Activated CD8-positive, alpha-beta T cell treated with anti-CD3 and anti-CD28 coated beads for 36 hours (primary cell): ENCODE measurements at regions of chr21 and their contacts with region 1.

Region 1: GRCh38 chr21:25385911-25386474 is 221.3 kb downstream of the MRPL39 start:
- DNase-seq: no peak
- ATAC-seq: peak; percentile 70
- H3K4me3 Mint-ChIP-seq: no peak overlapping the region
- H3K27ac Mint-ChIP-seq: no peak overlapping the region
- H3K4me1 Mint-ChIP-seq: peaks cover 14% of the 10 kb centered on the region
- H3K27me3 Mint-ChIP-seq: peaks cover 2% of the 10 kb centered on the region
- CTCF ChIP-seq: peak; percentile 90

Region 2: DNA sequence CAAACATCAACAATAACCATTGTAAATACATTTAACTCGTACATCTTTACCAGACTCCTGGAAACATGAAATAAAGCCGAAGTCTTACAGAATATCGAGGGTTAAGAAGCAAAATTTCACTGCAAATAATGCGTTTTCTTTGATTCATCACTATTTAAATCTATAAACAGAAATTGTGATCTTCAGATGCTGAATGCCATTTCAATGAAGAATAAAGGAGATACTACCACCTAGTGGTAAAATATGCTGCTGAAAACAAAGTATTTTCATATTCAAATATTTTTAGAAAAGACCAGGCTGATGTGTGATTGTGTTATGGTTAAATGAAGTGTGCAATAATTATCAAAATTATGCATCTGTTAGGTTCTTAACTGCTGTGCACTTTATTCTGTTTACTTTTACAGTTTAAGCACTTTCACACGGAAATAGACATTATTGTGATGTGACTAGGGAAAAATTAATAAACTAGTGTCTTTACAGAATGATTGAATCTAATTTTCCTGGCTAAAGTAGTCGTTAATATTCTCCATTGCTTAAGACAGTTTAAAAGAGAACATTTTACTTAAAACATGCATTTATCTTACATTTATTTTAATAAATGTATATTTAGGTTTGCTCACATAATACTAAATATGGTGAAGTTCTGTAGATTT is 871.8 kb before region 1 on chr21:
- CTCF ChIA-PET with region 1: no interaction called
- POLR2A ChIA-PET with region 1: no interaction called
- intact Hi-C with region 1: loop called (anchors 10 kb)
- DNase-seq: no peak
- ATAC-seq: no peak
- H3K4me3 Mint-ChIP-seq: no peak overlapping the region
- H3K27ac Mint-ChIP-seq: no peak overlapping the region
- H3K4me1 Mint-ChIP-seq: no peaks in the 10 kb centered on the region
- H3K27me3 Mint-ChIP-seq: no peaks in the 10 kb centered on the region
- CTCF ChIP-seq: peak; percentile 74

Region 3: DNA sequence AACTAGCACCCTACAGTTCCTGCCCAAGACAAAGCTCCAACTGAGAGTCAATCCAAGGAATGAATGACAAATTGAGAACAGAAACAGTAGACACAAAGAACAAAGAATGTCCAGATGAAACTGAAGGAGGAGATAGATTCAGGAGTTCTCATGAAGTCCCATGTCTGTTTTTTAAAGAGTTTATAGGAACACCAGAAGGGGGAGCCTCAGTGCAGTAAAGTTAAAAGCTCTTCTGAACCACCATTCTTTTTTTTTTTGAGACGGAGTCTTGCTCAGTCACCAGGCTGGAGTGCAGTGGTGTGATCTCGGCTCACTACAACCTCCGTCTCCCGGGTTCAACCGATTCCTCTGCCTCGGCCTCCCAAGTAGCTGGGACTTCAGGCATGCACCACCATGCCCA is 102.3 kb before region 1 on chr21:
- CTCF ChIA-PET with region 1: interaction called, 21 read pairs
- POLR2A ChIA-PET with region 1: no interaction called
- intact Hi-C with region 1: loop called (anchors 5 kb)
- DNase-seq: no peak
- ATAC-seq: peak; percentile 45
- H3K4me3 Mint-ChIP-seq: no peak overlapping the region
- H3K27ac Mint-ChIP-seq: no peak overlapping the region
- H3K4me1 Mint-ChIP-seq: no peaks in the 10 kb centered on the region
- H3K27me3 Mint-ChIP-seq: peaks cover 4% of the 10 kb centered on the region
- CTCF ChIP-seq: peak; percentile 44

Region 4: DNA sequence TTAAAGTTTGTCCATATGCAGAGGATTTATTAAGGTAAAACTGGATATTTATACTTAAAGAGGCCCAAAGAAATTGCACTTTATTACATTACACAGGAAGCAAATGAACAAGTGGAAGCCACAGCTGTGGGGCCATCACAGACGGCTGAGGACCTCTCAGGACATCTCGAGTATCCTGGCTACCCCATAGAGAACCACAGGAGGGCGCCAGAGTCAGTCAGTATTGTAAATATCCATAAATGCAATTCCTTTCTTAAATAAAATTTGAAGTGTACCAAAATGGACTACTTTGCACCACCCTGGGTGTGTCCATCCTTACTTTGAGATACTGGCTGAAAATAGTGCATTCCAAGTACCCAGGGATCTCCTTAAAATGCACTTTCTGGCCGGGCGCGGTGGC is 35.9 kb before region 1 on chr21:
- CTCF ChIA-PET with region 1: interaction called, 54 read pairs
- POLR2A ChIA-PET with region 1: no interaction called
- intact Hi-C with region 1: no loop called
- DNase-seq: peak; percentile 77
- ATAC-seq: peak; percentile 78
- H3K4me3 Mint-ChIP-seq: no peak overlapping the region
- H3K27ac Mint-ChIP-seq: no peak overlapping the region
- H3K4me1 Mint-ChIP-seq: peaks cover 5% of the 10 kb centered on the region
- H3K27me3 Mint-ChIP-seq: peaks cover 29% of the 10 kb centered on the region
- CTCF ChIP-seq: peak; percentile 75

Region 5: DNA sequence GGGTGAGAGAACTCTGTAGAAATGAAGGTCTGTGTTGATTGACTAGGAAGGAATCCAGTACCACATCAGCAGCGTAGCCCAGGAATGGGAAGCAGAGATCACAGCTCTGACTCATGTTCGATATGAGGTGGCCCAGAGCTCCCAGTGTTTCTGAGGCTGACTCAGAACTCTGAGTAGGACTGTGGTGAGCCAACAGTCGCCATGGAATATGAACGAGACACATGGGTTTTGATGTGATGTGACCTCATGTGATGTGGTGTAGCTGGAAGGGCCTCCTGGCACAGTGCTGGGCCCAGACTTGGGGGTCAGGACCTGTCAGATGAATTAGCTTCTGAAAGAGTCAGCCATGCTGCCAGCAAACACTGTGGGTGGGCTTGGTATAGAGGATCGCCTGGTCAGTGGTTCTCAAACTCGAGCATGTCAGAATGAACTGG is 15.7 kb before region 1 on chr21:
- CTCF ChIA-PET with region 1: interaction called, 14 read pairs
- POLR2A ChIA-PET with region 1: no interaction called
- intact Hi-C with region 1: loop called (anchors 1 kb)
- DNase-seq: peak; percentile 17
- ATAC-seq: peak; percentile 75
- H3K4me3 Mint-ChIP-seq: no peak overlapping the region
- H3K27ac Mint-ChIP-seq: no peak overlapping the region
- H3K4me1 Mint-ChIP-seq: peaks cover 3% of the 10 kb centered on the region
- H3K27me3 Mint-ChIP-seq: peaks cover 3% of the 10 kb centered on the region
- CTCF ChIP-seq: no peak

Region 6: DNA sequence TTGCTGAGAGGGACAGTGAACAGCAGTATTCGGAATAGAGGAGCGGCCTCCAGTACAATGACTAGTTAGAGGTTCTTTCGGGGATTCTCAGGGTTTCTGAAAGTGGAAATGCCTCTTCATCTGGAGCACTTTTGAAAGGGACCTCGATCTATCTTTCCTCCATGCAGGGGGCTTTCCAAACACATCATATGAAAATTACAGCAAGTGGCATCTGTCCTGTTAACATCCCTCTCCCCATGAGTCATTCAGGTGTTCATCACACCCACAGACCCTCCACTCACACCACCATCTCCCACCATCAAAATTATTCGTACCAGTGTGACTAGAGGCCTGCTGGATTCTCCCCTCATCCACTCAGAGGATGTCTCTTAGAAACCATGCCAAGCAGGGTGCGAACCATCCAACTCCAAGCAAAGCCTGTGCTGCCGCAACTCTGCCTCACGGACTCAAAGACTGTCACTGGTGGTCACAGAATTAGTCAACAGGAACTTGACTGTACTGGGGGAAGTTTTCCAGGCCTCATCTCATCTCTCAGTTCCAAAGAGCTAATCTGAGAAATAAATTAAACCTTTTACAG is 10.2 kb after region 1 on chr21:
- CTCF ChIA-PET with region 1: interaction called, 14 read pairs
- POLR2A ChIA-PET with region 1: no interaction called
- intact Hi-C with region 1: no loop called
- DNase-seq: peak; percentile 91
- ATAC-seq: peak; percentile 96
- H3K4me3 Mint-ChIP-seq: peak overlapping the region; percentile 25
- H3K27ac Mint-ChIP-seq: peak overlapping the region; percentile 84
- H3K4me1 Mint-ChIP-seq: peaks cover 27% of the 10 kb centered on the region
- H3K27me3 Mint-ChIP-seq: no peaks in the 10 kb centered on the region
- CTCF ChIP-seq: no peak

Region 7: DNA sequence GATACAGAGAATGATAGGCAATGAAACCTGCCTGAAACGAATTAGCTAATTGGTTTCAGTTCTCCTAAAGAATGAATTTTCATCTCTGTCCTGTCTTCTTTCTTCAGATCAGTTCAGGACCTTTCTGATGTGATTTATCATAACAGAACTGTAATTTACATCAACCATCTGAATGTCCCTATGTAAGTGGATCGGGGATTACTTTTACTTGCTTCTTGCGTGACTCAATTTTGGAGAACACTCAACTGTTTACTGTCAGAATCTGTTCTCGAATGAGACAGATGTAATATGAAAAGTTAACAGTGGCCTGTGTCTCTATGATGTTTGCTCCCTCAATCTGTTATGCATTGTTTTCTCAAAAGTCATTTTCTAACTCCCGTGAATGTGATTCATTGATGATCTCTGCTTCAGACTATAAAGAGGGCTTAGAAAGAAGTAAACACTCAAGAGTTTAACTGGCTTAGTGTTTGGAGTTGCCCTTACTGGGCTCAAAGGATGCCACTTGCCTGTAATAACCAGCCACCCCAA is 459.8 kb after region 1 on chr21:
- CTCF ChIA-PET with region 1: no interaction called
- POLR2A ChIA-PET with region 1: no interaction called
- intact Hi-C with region 1: no loop called
- DNase-seq: no peak
- ATAC-seq: no peak
- H3K4me3 Mint-ChIP-seq: no peak overlapping the region
- H3K27ac Mint-ChIP-seq: no peak overlapping the region
- H3K4me1 Mint-ChIP-seq: no peaks in the 10 kb centered on the region
- H3K27me3 Mint-ChIP-seq: no peaks in the 10 kb centered on the region
- CTCF ChIP-seq: no peak